ENCODE measurements at regions of chr11 and their contacts with region 1.

Region 1: GRCh38 chr11:16917941-16918340 is 96.3 kb downstream of the PLEKHA7 start:
- DNase-seq: no peak
- ATAC-seq: no peak
- H3K4me3 ChIP-seq: no peak overlapping the region
- H3K4me1 ChIP-seq: peaks cover 34% of the 10 kb centered on the region
- CTCF ChIP-seq: no peak

Region 2: GRCh38 chr11:16871368-16871767 is 46.6 kb before region 1 on chr11:
- intact Hi-C with region 1: no loop called
- DNase-seq: no peak
- ATAC-seq: no peak
- H3K4me3 ChIP-seq: no peak overlapping the region
- H3K4me1 ChIP-seq: no peaks in the 10 kb centered on the region
- CTCF ChIP-seq: no peak

Region 3: DNA sequence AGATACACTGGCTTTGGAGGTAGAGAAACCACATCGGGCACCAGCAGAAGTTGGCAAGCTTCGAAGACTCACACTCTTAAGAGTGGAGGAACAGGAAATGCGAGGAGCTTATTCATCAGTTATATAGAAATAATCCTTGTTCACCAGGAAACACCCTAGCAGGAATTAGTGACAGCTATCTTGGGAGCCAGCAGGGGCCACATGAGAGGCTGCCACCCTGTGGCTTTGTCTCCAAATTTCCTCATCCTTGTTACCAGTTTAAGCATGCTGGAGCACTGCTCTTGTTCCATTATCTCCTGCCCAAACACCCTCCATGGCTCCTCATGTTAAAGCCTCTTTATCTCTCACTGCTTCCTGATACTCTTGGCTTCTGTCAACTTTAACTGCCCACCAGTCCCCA is 34.8 kb before region 1 on chr11:
- intact Hi-C with region 1: loop called in 1 of 2 experiments (anchors 1 kb)
- DNase-seq: peak in 1 of 3 donors; percentile 29
- ATAC-seq: peak; percentile 90
- H3K4me3 ChIP-seq: no peak overlapping the region
- H3K4me1 ChIP-seq: peaks cover 10% of the 10 kb centered on the region
- CTCF ChIP-seq: no peak